B cell (primary cell): ENCODE measurements at regions of chr1 and their contacts with region 1.

Region 1: DNA sequence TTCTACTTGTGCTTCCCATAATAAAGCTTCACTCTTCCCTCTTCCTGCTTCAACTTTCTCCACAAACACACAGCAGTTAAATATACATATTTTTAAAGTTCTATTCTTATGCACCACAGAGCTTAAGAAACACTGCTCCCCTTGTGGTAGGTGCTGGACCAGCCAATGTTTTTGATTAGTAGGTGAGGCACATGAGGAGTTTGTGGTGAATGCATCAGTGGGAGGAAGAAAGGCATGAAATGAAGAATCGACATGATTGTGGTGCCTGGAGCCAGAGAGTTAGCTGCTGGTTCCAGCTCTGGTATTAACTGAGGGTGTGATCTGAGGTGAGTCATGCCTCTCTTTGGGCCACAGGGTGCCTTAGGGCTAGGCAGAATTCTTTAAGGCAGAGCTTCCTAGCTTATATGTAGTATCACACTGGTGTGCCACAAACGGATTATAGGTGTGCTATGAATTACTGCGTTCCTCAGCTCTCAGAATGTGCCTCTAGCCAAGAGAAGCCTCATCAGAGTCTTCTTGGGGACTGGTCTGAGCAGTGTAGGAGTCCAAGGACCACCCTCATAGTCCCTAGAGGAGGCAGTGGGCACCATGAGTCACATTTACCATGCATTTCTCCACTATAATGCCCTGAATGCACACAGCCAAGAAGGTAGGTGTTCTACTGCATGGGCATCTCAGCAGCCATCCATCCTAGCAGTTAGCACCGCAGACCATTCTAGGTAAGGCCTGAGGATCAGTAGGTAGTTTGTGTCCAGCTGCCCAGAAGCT is 97.4 kb upstream of the SGIP1 start:
- DNase-seq: peak; percentile 52
- ATAC-seq: peak; percentile 65
- H3K4me3 ChIP-seq: no peak overlapping the region
- H3K4me3 Mint-ChIP-seq: no peak overlapping the region
- H3K27ac ChIP-seq: no peak overlapping the region
- H3K27ac Mint-ChIP-seq: peak overlapping the region; percentile 32
- H3K4me1 ChIP-seq: peaks cover 20 to 21% of the 10 kb centered on the region in 2 donors
- H3K4me1 Mint-ChIP-seq: peaks cover 34% of the 10 kb centered on the region
- H3K27me3 ChIP-seq: no peaks in the 10 kb centered on the region
- H3K27me3 Mint-ChIP-seq: no peaks in the 10 kb centered on the region
- CTCF ChIP-seq: peak; percentile 16

Region 2: GRCh38 chr1:66350001-66350547 is 86.5 kb before region 1 on chr1:
- CTCF ChIA-PET with region 1: interaction called, 71 read pairs
- POLR2A ChIA-PET with region 1: no interaction called
- intact Hi-C with region 1: no loop called
- DNase-seq: peak; percentile 82
- ATAC-seq: peak; percentile 78
- H3K4me3 ChIP-seq: peak overlapping the region in 2 of 5 experiments; percentile 4 to 31
- H3K4me3 Mint-ChIP-seq: peak overlapping the region; percentile 88
- H3K27ac ChIP-seq: peak overlapping the region; percentile 74 to 87
- H3K27ac Mint-ChIP-seq: peak overlapping the region; percentile 84
- H3K4me1 ChIP-seq: peaks cover 74 to 94% of the 10 kb centered on the region in 2 donors
- H3K4me1 Mint-ChIP-seq: peaks cover 95% of the 10 kb centered on the region
- H3K27me3 ChIP-seq: no peaks in the 10 kb centered on the region
- H3K27me3 Mint-ChIP-seq: no peaks in the 10 kb centered on the region
- CTCF ChIP-seq: no peak

Region 3: GRCh38 chr1:66374561-66375111 is 61.9 kb before region 1 on chr1:
- CTCF ChIA-PET with region 1: interaction called, 38 read pairs
- POLR2A ChIA-PET with region 1: no interaction called
- intact Hi-C with region 1: no loop called
- DNase-seq: peak; percentile 90
- ATAC-seq: peak; percentile 73
- H3K4me3 ChIP-seq: peak overlapping the region in 1 of 5 experiments; percentile 13
- H3K4me3 Mint-ChIP-seq: peak overlapping the region; percentile 69
- H3K27ac ChIP-seq: peak overlapping the region; percentile 83 to 90
- H3K27ac Mint-ChIP-seq: peak overlapping the region; percentile 81
- H3K4me1 ChIP-seq: peaks cover 82 to 89% of the 10 kb centered on the region in 2 donors
- H3K4me1 Mint-ChIP-seq: peaks cover 86% of the 10 kb centered on the region
- H3K27me3 ChIP-seq: no peaks in the 10 kb centered on the region
- H3K27me3 Mint-ChIP-seq: no peaks in the 10 kb centered on the region
- CTCF ChIP-seq: no peak

Region 4: GRCh38 chr1:66396212-66396890 is 40.2 kb before region 1 on chr1:
- CTCF ChIA-PET with region 1: interaction called, 25 read pairs
- POLR2A ChIA-PET with region 1: no interaction called
- intact Hi-C with region 1: no loop called
- DNase-seq: no peak
- ATAC-seq: peak; percentile 34
- H3K4me3 ChIP-seq: no peak overlapping the region
- H3K4me3 Mint-ChIP-seq: peak overlapping the region; percentile 46
- H3K27ac ChIP-seq: peak overlapping the region in 1 of 2 donors; percentile 15
- H3K27ac Mint-ChIP-seq: peak overlapping the region; percentile 53
- H3K4me1 ChIP-seq: peaks cover 43 to 52% of the 10 kb centered on the region in 2 donors
- H3K4me1 Mint-ChIP-seq: peaks cover 72% of the 10 kb centered on the region
- H3K27me3 ChIP-seq: no peaks in the 10 kb centered on the region
- H3K27me3 Mint-ChIP-seq: no peaks in the 10 kb centered on the region
- CTCF ChIP-seq: no peak

Region 5: GRCh38 chr1:66413136-66413837 is 23.3 kb before region 1 on chr1:
- CTCF ChIA-PET with region 1: interaction called, 13 read pairs
- POLR2A ChIA-PET with region 1: no interaction called
- intact Hi-C with region 1: no loop called
- DNase-seq: no peak
- ATAC-seq: no peak
- H3K4me3 ChIP-seq: no peak overlapping the region
- H3K4me3 Mint-ChIP-seq: no peak overlapping the region
- H3K27ac ChIP-seq: no peak overlapping the region
- H3K27ac Mint-ChIP-seq: no peak overlapping the region
- H3K4me1 ChIP-seq: no peaks in the 10 kb centered on the region
- H3K4me1 Mint-ChIP-seq: peaks cover 10% of the 10 kb centered on the region
- H3K27me3 ChIP-seq: no peaks in the 10 kb centered on the region
- H3K27me3 Mint-ChIP-seq: no peaks in the 10 kb centered on the region
- CTCF ChIP-seq: no peak